Activated T-helper 1 cell treated with anti-CD3 and anti-CD28 coated beads, Interleukin-12 subunit alpha, Interleukin-12 subunit beta, Interleukin-2, Interleukin-4 antibody, amounts not matched to agents 30 ng/mL and 10 ng/mL and 1 ng/mL, durations not matched to agents 14 hours and 24 hours and 36 hours (primary cell): ENCODE measurements at regions of chr6 and their contacts with region 1.

Region 1: DNA sequence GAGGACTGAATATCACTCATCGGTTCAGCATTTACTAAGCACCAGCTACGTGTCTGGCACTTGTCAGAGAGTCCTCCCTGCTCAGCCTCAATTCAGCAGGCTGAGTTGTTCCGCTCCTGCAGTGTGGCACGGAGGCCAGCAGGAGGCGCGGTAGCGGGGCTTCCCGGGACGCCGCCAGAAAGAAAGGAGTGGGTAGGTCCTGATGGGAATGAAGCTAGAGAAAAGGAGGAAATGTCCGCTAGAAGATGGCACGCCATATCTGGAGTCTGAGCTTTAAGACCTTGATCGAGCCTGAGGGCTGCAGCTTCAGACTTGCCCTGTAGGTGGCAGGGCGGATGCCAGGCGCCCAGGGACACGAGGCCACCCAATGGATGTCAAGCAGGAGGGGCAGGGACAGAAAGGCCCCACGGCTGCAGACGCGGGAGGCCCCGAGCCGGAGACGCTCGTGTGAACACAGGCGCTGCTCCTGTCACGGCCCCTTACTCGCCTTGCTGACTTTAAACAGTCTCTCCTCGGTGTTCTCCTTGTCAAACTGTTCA is 18.7 kb downstream of the SERPINB6 start:
- DNase-seq: peak; percentile 36
- H3K4me3 Mint-ChIP-seq: peak overlapping the region; percentile 4
- H3K27ac Mint-ChIP-seq: no peak overlapping the region
- H3K4me1 Mint-ChIP-seq: peaks cover 14% of the 10 kb centered on the region
- H3K27me3 Mint-ChIP-seq: peaks cover 13% of the 10 kb centered on the region

Region 2: DNA sequence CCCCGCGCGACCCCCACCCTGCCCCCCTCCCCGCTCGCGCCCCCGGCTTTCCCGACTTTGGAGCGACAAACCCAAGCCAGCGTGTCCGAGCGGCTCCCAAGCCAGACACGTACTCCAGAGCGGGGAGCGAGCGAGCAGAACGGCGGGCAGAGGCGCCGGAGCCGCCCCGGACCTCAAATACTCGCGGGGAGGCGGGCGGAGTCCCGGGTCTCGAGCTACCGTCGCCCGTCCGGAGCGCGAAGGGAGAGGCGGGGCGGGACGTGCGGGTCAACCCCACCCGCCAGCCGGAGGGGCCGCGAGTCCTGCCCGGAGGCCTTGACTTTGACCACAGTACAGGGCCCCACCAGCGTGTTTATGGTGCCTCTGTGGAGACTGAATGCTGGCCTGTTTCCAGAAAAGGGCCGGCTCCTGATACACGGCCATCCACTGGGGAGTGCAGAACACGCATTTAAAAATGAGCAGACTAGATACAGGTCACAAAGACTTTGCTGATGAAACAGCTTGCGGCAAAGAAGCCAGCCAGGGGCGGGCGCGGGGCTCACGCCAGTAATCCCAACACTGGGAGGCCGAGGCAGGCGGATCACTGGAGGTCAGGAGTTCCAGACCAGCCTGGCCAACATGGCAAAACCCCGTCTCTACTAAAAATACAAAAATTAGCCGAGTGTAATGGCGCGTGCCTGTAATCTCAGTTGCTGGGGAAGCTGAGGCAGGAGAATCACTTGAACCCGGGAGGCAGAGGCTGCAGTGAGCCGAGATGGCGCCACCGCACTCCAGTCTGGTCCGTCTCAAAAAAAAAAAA is 19.0 kb after region 1 on chr6 and contains the start of gene SERPINB6:
- intact Hi-C with region 1: loop called (anchors 2 kb)
- DNase-seq: peak; percentile 23
- H3K4me3 Mint-ChIP-seq: peak within 1 kb of the TSS; percentile 85
- H3K27ac Mint-ChIP-seq: peak within 1 kb of the TSS; percentile 83
- H3K4me1 Mint-ChIP-seq: peaks cover 16% of the 10 kb centered on the region
- H3K27me3 Mint-ChIP-seq: peaks cover 40% of the 10 kb centered on the region
- total RNA-seq, gene SERPINB6: 33.7 and 34.9 TPM in 2 replicates